ENCODE measurements at regions of chr6 and their contacts with region 1.

Region 1: GRCh38 chr6:117976030-117976651 is 69.1 kb downstream of the SLC35F1 start:
- DNase-seq: no peak
- ATAC-seq: peak; percentile 62

Region 2: GRCh38 chr6:118269659-118270058 is 293.5 kb after region 1 on chr6:
- intact Hi-C with region 1: loop called (anchors 5 kb)
- DNase-seq: no peak
- ATAC-seq: no peak

Region 3: DNA sequence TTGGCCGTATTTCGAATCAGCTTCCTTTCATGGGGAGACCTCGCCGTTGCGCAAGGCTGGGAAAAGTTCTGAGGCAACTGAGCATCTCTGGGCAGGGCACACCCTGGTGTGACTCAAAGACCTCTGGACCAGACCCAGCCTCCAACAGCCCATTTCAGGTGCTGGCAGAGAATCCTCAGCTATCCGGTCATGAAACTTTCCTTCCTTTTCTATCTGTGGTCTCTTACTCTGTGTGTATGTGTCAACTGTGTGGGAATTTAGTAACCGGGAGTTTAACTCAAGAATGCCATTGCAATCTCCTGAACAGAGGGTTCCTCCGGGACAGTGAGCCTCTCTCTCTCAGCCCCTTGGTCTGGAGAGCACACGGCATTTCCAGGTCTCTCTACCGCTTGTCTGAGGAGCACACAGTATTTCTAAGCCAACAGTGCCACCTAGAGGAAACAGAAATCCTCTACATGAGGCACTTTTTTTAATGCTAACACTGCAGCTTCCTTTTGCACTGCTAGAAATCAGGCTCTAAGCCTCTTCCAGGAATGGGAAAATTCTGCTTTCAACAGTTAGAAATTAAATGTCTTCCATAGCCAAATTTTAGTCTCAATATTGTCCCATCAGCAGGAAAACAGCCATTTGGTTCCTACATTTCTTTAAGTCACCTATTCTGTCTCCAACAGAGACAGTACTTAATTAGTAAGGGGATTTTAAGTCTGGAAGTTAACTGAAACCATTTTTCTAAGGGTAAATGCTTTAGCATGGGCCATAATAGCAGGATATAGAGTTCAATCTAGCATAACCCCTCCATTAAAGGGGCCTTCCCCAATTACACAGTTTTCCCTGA is 604.7 kb after region 1 on chr6:
- intact Hi-C with region 1: loop called (anchors 10 kb)
- DNase-seq: peak; percentile 43
- ATAC-seq: peak; percentile 95

Measured in Right ventricle myocardium superior (tissue), 1 donor.